AG04450 (cell line): ENCODE measurements at regions of chr14 and their contacts with region 1.

Region 1: DNA sequence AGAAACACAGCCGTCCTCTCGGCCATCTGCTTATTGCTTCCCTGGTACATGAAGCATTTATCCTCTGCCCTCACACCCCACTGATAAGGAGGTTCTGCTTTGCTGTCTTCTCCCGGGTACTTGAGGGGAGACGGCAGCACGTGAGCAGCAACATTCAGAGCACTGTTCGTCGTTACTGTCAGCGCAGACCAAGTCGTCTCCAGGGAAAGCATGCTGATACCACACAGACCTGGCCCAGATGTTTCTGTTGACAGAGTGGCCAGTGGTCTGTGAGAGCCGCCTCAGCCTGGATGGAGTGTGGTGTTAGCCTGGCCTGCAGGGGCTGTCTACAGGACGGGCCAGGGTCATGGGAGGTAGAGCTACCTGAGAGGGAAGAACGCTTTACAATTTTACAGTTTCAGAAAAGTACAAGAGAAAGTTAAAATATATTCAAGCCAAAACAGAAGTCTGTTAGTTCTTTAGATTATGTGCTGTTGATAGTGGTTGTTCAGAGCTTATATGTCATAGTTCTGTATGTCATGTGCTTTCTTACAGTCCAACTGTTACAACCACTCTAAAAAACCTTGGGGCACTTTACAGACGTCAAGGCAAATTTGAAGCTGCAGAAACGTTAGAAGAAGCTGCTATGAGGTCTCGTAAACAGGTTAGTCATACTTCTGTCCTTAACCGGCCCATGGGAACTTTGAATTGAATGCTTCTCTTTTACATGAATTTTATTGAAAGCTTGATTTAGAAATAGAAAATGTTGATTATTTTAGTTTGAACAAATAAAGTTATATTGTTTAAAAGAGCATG is 38.2 kb downstream of the XRCC3 start:
- DNase-seq: no peak
- H3K4me3 ChIP-seq: no peak overlapping the region
- H3K27ac ChIP-seq: no peak overlapping the region
- H3K27me3 ChIP-seq: no peaks in the 10 kb centered on the region
- CTCF ChIP-seq: no peak

Region 2: DNA sequence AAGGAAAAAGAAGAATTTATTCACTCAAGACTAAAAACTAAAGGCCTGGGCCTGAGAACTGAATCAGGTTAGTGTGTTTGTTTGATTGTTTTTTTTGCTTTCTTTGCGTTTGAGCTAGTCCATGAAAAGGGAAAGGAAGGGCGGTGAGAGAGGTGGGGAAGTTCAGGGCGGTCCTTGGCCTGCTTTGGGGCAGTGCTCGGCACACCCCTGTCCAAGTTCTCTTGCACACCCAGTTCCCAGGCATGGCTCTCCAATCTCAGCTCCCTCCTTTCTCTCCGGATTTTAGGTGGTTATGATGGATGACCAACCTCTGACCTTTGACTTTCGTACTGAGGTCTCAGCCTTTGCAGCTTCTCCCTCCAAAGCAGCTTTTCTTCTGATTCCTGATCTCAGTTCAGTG is 103.0 kb before region 1 on chr14:
- CTCF ChIA-PET with region 1: interaction called, 14 read pairs
- POLR2A ChIA-PET with region 1: no interaction called
- DNase-seq: no peak
- H3K4me3 ChIP-seq: no peak overlapping the region
- H3K27ac ChIP-seq: no peak overlapping the region
- H3K27me3 ChIP-seq: no peaks in the 10 kb centered on the region
- CTCF ChIP-seq: no peak

Region 3: GRCh38 chr14:103696028-103696402 is 18.9 kb after region 1 on chr14:
- CTCF ChIA-PET with region 1: no interaction called
- POLR2A ChIA-PET with region 1: no interaction called
- DNase-seq: no peak
- H3K4me3 ChIP-seq: no peak overlapping the region
- H3K27ac ChIP-seq: peak overlapping the region; percentile 77
- H3K27me3 ChIP-seq: no peaks in the 10 kb centered on the region
- CTCF ChIP-seq: no peak